MCF 10A (cell line): ENCODE measurements at regions of chr2 and their contacts with region 1.

Region 1: DNA sequence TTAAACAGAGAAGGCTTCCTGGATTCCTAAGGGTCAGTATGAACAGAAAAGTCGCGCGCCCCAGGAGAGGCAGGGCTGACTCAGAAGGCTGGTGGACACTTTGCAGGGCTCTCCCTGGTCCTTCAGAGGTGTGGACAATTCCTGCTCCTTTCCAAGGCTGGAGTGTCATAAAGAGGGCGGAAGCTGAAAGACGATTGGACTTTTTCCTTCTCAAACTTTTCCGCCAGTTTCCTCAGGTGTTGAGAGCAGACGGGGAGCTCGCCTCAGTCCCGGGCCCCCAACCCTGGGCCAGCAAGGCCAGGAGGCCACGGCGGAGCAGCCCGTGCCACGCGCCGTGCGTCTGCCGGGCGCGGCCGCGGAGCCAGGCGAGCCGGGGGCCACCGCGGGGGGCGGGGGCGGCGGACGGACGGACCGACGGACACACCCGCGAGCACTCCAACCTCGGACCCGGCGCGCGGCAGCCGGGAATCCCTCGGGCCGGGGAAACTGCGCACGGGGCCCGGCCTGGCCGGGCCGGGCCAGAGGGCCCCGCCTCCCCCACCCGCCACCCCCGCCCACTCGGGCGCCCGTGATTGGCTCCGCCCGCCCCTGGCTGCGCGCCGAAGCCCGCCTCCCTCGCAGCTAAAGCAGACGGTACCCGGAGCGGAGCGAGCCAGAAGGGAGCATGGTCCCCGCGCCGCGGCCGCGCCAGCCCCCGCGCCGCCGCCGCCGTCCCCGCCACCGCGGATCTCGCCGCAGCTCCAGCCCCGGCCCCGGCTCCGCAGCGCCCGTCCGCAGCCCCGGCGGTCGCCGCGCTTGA is at the start of gene KLHL29:
- DNase-seq: peak; percentile 81
- H3K4me3 Mint-ChIP-seq: peak within 1 kb of the TSS; percentile 84
- H3K27ac Mint-ChIP-seq: peak within 1 kb of the TSS; percentile 83
- H3K4me1 Mint-ChIP-seq: peaks cover 30% of the 10 kb centered on the region
- H3K27me3 Mint-ChIP-seq: no peaks in the 10 kb centered on the region
- CTCF ChIP-seq: no peak
- total RNA-seq, gene KLHL29: 36.3 and 43.1 TPM in 2 replicates

Region 2: DNA sequence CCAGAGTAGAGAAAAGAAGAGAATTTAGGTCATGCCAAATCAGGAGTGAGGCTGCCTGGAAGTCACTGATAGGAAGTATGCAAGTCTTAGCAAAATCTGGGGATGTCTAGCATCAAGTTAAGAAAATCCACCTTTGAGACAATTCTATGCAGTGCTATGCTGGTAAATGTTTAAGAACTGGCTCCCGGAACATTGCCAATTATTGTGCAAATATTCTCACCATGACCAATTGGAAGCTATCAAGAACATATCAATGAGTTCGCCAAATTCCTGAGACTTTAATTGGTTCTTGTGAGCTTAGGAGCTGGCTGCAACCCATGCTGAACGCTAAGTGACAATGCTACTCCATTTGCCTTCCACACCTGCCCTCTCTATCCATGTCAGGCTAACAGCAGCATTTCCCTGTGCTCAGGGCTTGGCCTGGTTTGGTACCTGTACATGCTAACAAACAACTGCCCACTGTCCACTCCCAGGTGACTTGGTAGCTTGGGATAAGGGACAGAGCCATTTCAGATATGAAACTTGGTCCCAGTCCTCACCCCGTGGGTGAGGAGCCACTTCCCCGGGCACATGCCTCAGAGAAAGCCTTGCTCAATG is 172.7 kb before region 1 on chr2:
- CTCF ChIA-PET with region 1: no interaction called
- POLR2A ChIA-PET with region 1: no interaction called
- intact Hi-C with region 1: no loop called
- DNase-seq: no peak
- H3K4me3 Mint-ChIP-seq: no peak overlapping the region
- H3K27ac Mint-ChIP-seq: no peak overlapping the region
- H3K4me1 Mint-ChIP-seq: no peaks in the 10 kb centered on the region
- H3K27me3 Mint-ChIP-seq: peaks cover 92% of the 10 kb centered on the region
- CTCF ChIP-seq: no peak

Region 3: GRCh38 chr2:23414871-23415270 is 30.1 kb after region 1 on chr2:
- CTCF ChIA-PET with region 1: no interaction called
- POLR2A ChIA-PET with region 1: interaction called, 7 read pairs
- intact Hi-C with region 1: loop called (anchors 2 kb)
- DNase-seq: no peak
- H3K4me3 Mint-ChIP-seq: no peak overlapping the region
- H3K27ac Mint-ChIP-seq: no peak overlapping the region
- H3K4me1 Mint-ChIP-seq: peaks cover 45% of the 10 kb centered on the region
- H3K27me3 Mint-ChIP-seq: no peaks in the 10 kb centered on the region
- CTCF ChIP-seq: no peak

Region 4: GRCh38 chr2:23426263-23426905 is 41.6 kb after region 1 on chr2:
- CTCF ChIA-PET with region 1: no interaction called
- POLR2A ChIA-PET with region 1: interaction called, 10 read pairs
- intact Hi-C with region 1: no loop called
- DNase-seq: peak; percentile 67
- H3K4me3 Mint-ChIP-seq: peak overlapping the region; percentile 9
- H3K27ac Mint-ChIP-seq: peak overlapping the region; percentile 94
- H3K4me1 Mint-ChIP-seq: peaks cover 27% of the 10 kb centered on the region
- H3K27me3 Mint-ChIP-seq: no peaks in the 10 kb centered on the region
- CTCF ChIP-seq: no peak

Region 5: DNA sequence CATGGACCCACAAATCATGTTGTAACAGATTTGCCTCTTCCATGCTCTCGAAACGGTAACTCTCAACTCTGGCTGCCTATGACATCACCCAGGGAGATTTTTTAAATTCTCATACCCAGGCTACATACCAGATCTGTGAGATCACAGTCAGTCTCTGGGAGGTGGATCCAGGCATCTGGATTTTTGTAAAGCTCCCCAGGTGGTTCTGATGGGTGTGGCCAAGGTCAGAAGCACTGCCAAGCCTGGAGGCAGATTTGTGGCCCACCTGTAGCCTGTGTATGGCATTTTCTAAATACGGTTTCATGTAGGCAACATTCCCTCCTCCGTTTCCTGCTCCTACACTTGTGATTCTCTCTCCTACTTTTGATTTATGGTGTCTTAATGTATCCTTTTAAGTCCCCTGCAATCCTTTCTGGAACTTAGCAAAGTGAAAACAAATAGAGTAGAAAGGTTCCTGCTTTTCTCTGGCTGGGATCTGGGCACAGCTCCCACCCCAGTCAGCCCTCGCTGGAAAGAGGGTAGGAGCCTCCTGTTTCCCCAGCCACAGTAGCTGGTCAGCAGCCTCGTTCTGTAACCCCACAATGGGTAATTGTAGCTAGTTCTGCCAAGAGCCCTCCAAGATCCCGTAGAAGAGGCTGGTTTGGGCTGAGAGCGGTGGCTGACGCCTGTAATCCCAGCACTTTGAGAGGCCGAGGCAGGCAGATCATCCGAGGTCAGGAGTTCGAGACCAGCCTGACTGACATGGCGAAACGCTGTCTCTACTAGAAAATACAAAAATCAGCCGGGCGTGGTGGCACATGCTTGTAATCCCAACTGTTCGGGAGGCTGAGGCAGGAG is 96.5 kb after region 1 on chr2:
- CTCF ChIA-PET with region 1: interaction called, 4 read pairs
- POLR2A ChIA-PET with region 1: no interaction called
- intact Hi-C with region 1: loop called (anchors 10 kb)
- DNase-seq: peak; percentile 73
- H3K4me3 Mint-ChIP-seq: peak overlapping the region; percentile 8
- H3K27ac Mint-ChIP-seq: peak overlapping the region; percentile 11
- H3K4me1 Mint-ChIP-seq: peaks cover 19% of the 10 kb centered on the region
- H3K27me3 Mint-ChIP-seq: no peaks in the 10 kb centered on the region
- CTCF ChIP-seq: no peak

Region 6: GRCh38 chr2:23566236-23567142 is 181.7 kb after region 1 on chr2:
- CTCF ChIA-PET with region 1: no interaction called
- POLR2A ChIA-PET with region 1: no interaction called
- intact Hi-C with region 1: loop called (anchors 10 kb)
- DNase-seq: peak; percentile 40
- H3K4me3 Mint-ChIP-seq: no peak overlapping the region
- H3K27ac Mint-ChIP-seq: no peak overlapping the region
- H3K4me1 Mint-ChIP-seq: peaks cover 16% of the 10 kb centered on the region
- H3K27me3 Mint-ChIP-seq: no peaks in the 10 kb centered on the region
- CTCF ChIP-seq: peak; percentile 20

Region 7: GRCh38 chr2:23617167-23617810 is 232.5 kb after region 1 on chr2:
- CTCF ChIA-PET with region 1: no interaction called
- POLR2A ChIA-PET with region 1: no interaction called
- intact Hi-C with region 1: no loop called
- DNase-seq: no peak
- H3K4me3 Mint-ChIP-seq: no peak overlapping the region
- H3K27ac Mint-ChIP-seq: no peak overlapping the region
- H3K4me1 Mint-ChIP-seq: no peaks in the 10 kb centered on the region
- H3K27me3 Mint-ChIP-seq: no peaks in the 10 kb centered on the region
- CTCF ChIP-seq: no peak

Region 8: GRCh38 chr2:23760736-23761135 is 376.0 kb after region 1 on chr2:
- CTCF ChIA-PET with region 1: no interaction called
- POLR2A ChIA-PET with region 1: no interaction called
- intact Hi-C with region 1: loop called (anchors 10 kb)
- DNase-seq: peak; percentile 41
- H3K4me3 Mint-ChIP-seq: no peak overlapping the region
- H3K27ac Mint-ChIP-seq: peak overlapping the region; percentile 82
- H3K4me1 Mint-ChIP-seq: peaks cover 25% of the 10 kb centered on the region
- H3K27me3 Mint-ChIP-seq: no peaks in the 10 kb centered on the region
- CTCF ChIP-seq: no peak